Activated naive CD8-positive, alpha-beta T cell treated with anti-CD3 and anti-CD28 coated beads, Interleukin-2, amount 10 ng/mL, durations not matched to agents 7 days and 5 days (primary cell): ENCODE measurements at regions of chr2 and their contacts with region 1.

Region 1: DNA sequence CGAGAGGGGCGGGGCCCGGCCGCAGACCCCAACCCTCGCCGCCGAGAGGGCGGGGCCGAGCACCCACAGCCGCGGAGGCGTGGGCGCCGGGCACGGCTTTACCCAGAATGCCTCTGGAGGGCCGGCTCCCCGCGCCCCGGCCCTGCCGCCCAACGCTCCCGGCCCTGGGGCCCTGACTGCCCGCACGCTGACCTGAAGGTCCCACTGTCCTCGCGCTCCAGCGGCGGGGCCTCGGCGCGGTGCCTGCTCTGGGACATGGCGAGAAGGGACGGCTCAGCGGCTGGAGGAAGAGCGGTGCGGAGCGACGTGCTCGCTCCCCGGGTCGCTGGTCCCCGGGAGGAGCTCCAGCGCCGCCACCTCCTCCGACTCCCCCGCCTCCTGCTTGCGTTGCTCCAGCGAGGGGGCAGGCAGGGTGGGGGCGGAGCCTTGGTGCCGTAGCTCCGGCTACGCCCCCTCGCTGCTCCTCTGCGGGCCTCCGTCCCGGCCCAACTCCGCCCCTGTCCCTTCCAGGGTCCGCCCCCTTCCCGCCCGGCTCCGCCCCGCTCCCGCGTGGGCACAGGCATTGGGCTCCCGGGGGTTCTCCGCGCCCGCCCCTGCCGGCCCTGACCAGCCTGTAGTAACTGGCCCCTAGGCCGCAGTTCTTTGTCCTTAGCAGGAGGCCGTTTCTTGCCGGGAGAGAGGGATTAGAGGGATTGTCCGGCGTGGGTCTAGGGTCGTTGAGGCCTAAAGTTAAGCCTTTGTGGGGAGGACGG is at the starts of genes PJVK and PRKRA:
- DNase-seq: peak; percentile 98
- ATAC-seq: peak; percentile 91
- H3K4me3 Mint-ChIP-seq: peak within 1 kb of the TSS; percentile 90
- H3K27ac Mint-ChIP-seq: peak within 1 kb of the TSS; percentile 93
- H3K4me1 Mint-ChIP-seq: peaks cover 25% of the 10 kb centered on the region
- H3K27me3 Mint-ChIP-seq: no peaks in the 10 kb centered on the region
- total RNA-seq, gene PJVK: 2.3 to 2.5 TPM
- total RNA-seq, gene PRKRA: 43.6 to 47.1 TPM

Region 2: GRCh38 chr2:178414266-178415247 is 36.4 kb before region 1 on chr2:
- POLR2A ChIA-PET with region 1: interaction called, 37 read pairs
- DNase-seq: peak; percentile 76
- ATAC-seq: peak; percentile 75
- H3K4me3 Mint-ChIP-seq: peak overlapping the region; percentile 94
- H3K27ac Mint-ChIP-seq: peak overlapping the region; percentile 98
- H3K4me1 Mint-ChIP-seq: peaks cover 23% of the 10 kb centered on the region
- H3K27me3 Mint-ChIP-seq: no peaks in the 10 kb centered on the region

Region 3: DNA sequence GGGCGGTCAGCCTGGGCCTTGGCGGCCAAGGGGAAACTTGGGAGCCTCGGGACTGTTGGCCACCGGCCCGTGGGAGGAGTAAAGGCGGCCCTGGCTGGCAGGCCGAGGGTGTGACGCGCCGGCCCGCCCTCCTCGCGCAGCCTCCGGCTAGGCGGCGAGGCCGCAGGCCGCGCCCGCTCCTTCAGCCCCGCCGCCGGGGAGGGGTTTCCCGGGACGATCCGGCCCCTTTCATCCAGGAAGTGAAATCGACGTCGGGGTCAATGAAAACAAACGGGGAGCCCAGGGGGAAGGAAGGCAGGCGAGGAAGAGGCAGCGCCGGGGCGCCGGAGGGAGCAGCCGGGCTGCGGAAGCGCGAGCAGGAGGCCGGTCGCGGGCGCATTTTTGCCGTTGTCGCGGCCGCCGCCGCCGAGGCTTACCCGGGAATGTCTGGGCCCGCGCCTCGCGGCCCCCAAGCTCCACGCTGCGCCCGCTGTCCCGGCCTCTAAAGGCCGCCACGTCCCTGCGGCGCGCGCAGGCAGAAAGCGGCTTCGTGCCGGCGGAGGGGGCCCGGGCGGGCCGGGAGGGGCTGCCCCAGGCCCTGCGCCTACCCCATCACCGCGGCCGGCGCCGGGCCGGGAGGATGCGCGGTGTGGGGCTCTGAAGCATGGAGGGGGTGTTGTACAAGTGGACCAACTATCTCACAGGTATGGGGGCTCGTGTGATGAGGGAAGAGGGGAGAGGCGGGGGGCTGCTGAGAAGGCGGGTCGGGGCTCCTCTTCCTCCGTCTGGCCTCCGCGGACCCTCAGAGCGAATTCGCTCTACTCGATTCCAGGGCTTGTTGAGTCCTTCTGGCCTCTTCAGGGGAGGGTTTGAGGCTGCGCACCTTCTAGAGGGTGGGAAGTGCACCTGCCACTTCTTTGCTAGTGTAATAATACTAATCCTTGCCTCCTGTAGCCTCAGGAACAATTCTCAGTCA is 29.6 kb after region 1 on chr2 and contains the start of gene PLEKHA3:
- POLR2A ChIA-PET with region 1: interaction called, 16 read pairs
- DNase-seq: peak; percentile 84
- ATAC-seq: peak; percentile 72
- H3K4me3 Mint-ChIP-seq: peak within 1 kb of the TSS; percentile 94
- H3K27ac Mint-ChIP-seq: peak within 1 kb of the TSS; percentile 99
- H3K4me1 Mint-ChIP-seq: peaks cover 34% of the 10 kb centered on the region
- H3K27me3 Mint-ChIP-seq: no peaks in the 10 kb centered on the region
- total RNA-seq, gene PLEKHA3: 28.9 to 29.4 TPM

Region 4: GRCh38 chr2:178506524-178506923 is 55.6 kb after region 1 on chr2:
- POLR2A ChIA-PET with region 1: no interaction called
- DNase-seq: no peak
- ATAC-seq: no peak
- H3K4me3 Mint-ChIP-seq: no peak overlapping the region
- H3K27ac Mint-ChIP-seq: no peak overlapping the region
- H3K4me1 Mint-ChIP-seq: peaks cover 4% of the 10 kb centered on the region
- H3K27me3 Mint-ChIP-seq: no peaks in the 10 kb centered on the region

Region 5: GRCh38 chr2:178522950-178523595 is 72.1 kb after region 1 on chr2:
- POLR2A ChIA-PET with region 1: interaction called, 12 read pairs
- DNase-seq: peak; percentile 83
- ATAC-seq: peak; percentile 96
- H3K4me3 Mint-ChIP-seq: peak overlapping the region; percentile 94
- H3K27ac Mint-ChIP-seq: peak overlapping the region; percentile 90
- H3K4me1 Mint-ChIP-seq: peaks cover 27% of the 10 kb centered on the region
- H3K27me3 Mint-ChIP-seq: no peaks in the 10 kb centered on the region